ENCODE measurements at regions of chr1 and their contacts with region 1.

Region 1: GRCh38 chr1:155250633-155251449 is 4.4 kb downstream of the ENTREP3 start:
- DNase-seq: peak; percentile 72
- ATAC-seq: peak; percentile 87
- H3K4me3 ChIP-seq: no peak overlapping the region
- H3K27ac ChIP-seq: peak overlapping the region; percentile 23
- H3K4me1 ChIP-seq: peaks cover 14 to 31% of the 10 kb centered on the region in 2 experiments; a peak in 3 of 4 replicates
- H3K27me3 ChIP-seq: no peaks in the 10 kb centered on the region
- CTCF ChIP-seq: peak; percentile 99 to 100 (median 99)
- POLR2A ChIP-seq: no peak
- RAD21 ChIP-seq: peak; percentile 96

Region 2: GRCh38 chr1:155208541-155209311 is 42.1 kb before region 1 on chr1 and contains the start of gene MTX1:
- CTCF ChIA-PET with region 1: interaction called, 13 read pairs
- POLR2A ChIA-PET with region 1: no interaction called
- RAD21 ChIA-PET with region 1: no interaction called
- intact Hi-C with region 1: no loop called
- DNase-seq: no peak
- ATAC-seq: peak; percentile 76
- H3K4me3 ChIP-seq: peak within 1 kb of the TSS; percentile 89 to 100
- H3K27ac ChIP-seq: peak within 1 kb of the TSS; percentile 90
- H3K4me1 ChIP-seq: peaks cover 22 to 33% of the 10 kb centered on the region in 2 experiments
- H3K27me3 ChIP-seq: no peaks in the 10 kb centered on the region
- CTCF ChIP-seq: no peak
- POLR2A ChIP-seq: no peak
- RAD21 ChIP-seq: no peak
- total RNA-seq, gene MTX1: 69.1 TPM

Region 3: GRCh38 chr1:155308493-155309422 is 57.9 kb after region 1 on chr1 and contains the start of gene FDPS:
- CTCF ChIA-PET with region 1: interaction called, 12 read pairs
- POLR2A ChIA-PET with region 1: no interaction called
- RAD21 ChIA-PET with region 1: no interaction called
- intact Hi-C with region 1: loop called (anchors 5 kb)
- DNase-seq: peak; percentile 96
- ATAC-seq: peak; percentile 96
- H3K4me3 ChIP-seq: peak within 1 kb of the TSS; percentile 82 to 99
- H3K27ac ChIP-seq: peak within 1 kb of the TSS; percentile 88
- H3K4me1 ChIP-seq: peaks cover 8 to 26% of the 10 kb centered on the region in 2 experiments; a peak in 3 of 4 replicates
- H3K27me3 ChIP-seq: no peaks in the 10 kb centered on the region
- CTCF ChIP-seq: no peak
- POLR2A ChIP-seq: peak; percentile 95
- RAD21 ChIP-seq: no peak
- total RNA-seq, gene FDPS: 269 TPM

Region 4: GRCh38 chr1:155504207-155504606 is 253.4 kb after region 1 on chr1:
- CTCF ChIA-PET with region 1: interaction called, 11 read pairs
- POLR2A ChIA-PET with region 1: no interaction called
- RAD21 ChIA-PET with region 1: no interaction called
- intact Hi-C with region 1: loop called (anchors 1 kb)
- DNase-seq: peak; percentile 24
- ATAC-seq: peak; percentile 88
- H3K4me3 ChIP-seq: no peak overlapping the region
- H3K27ac ChIP-seq: no peak overlapping the region
- H3K4me1 ChIP-seq: no peaks in the 10 kb centered on the region
- H3K27me3 ChIP-seq: no peaks in the 10 kb centered on the region
- CTCF ChIP-seq: peak; percentile 23 to 47 (median 46); a peak in 4 of 6 replicates
- POLR2A ChIP-seq: no peak
- RAD21 ChIP-seq: peak; percentile 68

Measured in HCT116 (cell line).